ENCODE measurements at regions of chr3 and their contacts with region 1.

Region 1: GRCh38 chr3:185225523-185225922 is 28.3 kb downstream of the EHHADH start:
- DNase-seq: peak; percentile 77
- ATAC-seq: peak; percentile 94
- H3K4me3 ChIP-seq: no peak overlapping the region
- H3K27ac ChIP-seq: no peak overlapping the region
- H3K4me1 ChIP-seq: peaks cover 5% of the 10 kb centered on the region
- H3K27me3 ChIP-seq: no peaks in the 10 kb centered on the region
- CTCF ChIP-seq: no peak
- POLR2A ChIP-seq: no peak
- RAD21 ChIP-seq: no peak

Region 2: DNA sequence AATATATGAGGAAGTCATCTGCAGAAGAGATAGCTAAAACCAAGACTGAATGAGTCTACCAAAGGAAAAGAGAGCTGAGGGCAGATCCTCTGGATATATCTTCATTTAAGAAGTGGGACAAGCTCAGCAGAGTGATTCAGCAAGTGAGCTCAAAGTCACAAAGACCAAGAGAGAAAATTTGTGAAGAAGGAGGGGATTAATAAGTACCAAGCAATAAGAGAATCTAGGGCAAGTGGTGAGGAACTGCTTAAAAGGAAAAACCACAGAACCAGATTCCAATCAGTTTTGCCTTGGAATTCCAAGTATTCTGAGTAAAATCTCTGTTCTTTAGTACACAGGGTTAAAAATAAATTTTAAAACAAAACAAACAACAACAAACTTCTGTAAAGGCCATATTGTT is 24.7 kb after region 1 on chr3:
- CTCF ChIA-PET with region 1: interaction called, 10 read pairs
- POLR2A ChIA-PET with region 1: no interaction called
- dilution Hi-C with region 1: no loop called
- in situ Hi-C with region 1: no loop called
- intact Hi-C with region 1: no loop called
- DNase-seq: peak; percentile 4
- ATAC-seq: no peak
- H3K4me3 ChIP-seq: no peak overlapping the region
- H3K27ac ChIP-seq: no peak overlapping the region
- H3K4me1 ChIP-seq: no peaks in the 10 kb centered on the region
- H3K27me3 ChIP-seq: no peaks in the 10 kb centered on the region
- CTCF ChIP-seq: no peak
- POLR2A ChIP-seq: no peak
- RAD21 ChIP-seq: no peak

Region 3: GRCh38 chr3:185387646-185388045 is 162.1 kb after region 1 on chr3:
- CTCF ChIA-PET with region 1: no interaction called
- POLR2A ChIA-PET with region 1: no interaction called
- dilution Hi-C with region 1: no loop called
- in situ Hi-C with region 1: no loop called
- intact Hi-C with region 1: no loop called
- DNase-seq: no peak
- ATAC-seq: no peak
- H3K4me3 ChIP-seq: no peak overlapping the region
- H3K27ac ChIP-seq: no peak overlapping the region
- H3K4me1 ChIP-seq: no peaks in the 10 kb centered on the region
- H3K27me3 ChIP-seq: no peaks in the 10 kb centered on the region
- CTCF ChIP-seq: no peak
- POLR2A ChIP-seq: no peak
- RAD21 ChIP-seq: no peak